Posterior vena cava (tissue), 2 donors: ENCODE measurements at regions of chr17 and their contacts with region 1.

Region 1: DNA sequence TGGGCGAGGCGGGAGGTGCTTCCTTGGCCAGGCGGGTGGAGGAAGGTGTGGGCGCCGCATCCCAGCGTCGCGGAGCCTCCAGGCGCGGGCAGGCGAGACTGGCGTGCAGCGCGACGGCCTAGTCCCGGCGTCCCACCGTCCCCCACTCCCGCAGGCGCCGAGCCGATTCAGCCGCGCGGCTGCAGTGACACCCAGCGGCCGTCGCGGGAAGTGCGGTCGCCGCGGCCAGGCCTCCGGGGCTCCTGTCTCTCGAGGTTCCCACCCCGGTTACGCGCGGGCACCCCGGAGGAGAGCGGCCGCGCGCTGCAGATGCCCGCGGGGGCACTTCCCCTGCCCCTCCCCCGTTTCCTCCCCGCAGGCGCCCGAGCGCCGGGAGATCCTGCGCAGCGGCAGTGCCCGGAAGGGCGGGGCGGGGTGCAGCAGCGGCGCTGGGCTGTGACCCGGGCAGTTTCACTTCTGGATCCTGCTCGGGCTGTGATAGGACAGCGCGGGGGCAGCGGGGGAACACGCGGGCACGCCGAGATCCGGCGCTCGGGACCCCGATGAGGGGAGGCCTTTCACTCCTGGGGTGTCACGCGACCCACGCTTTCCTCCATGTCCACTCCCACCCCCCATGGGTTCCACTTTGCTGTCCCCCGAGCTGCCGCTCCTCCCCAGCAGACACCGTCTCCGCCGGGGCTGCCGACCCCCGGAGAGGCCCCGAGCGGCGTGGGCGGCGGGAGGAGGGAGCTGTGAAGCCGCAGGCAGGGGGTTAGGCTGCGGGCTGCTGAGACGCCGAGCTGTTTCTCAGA is 16.6 kb downstream of the GRB7 start:
- DNase-seq: peak; percentile 98

Region 2: DNA sequence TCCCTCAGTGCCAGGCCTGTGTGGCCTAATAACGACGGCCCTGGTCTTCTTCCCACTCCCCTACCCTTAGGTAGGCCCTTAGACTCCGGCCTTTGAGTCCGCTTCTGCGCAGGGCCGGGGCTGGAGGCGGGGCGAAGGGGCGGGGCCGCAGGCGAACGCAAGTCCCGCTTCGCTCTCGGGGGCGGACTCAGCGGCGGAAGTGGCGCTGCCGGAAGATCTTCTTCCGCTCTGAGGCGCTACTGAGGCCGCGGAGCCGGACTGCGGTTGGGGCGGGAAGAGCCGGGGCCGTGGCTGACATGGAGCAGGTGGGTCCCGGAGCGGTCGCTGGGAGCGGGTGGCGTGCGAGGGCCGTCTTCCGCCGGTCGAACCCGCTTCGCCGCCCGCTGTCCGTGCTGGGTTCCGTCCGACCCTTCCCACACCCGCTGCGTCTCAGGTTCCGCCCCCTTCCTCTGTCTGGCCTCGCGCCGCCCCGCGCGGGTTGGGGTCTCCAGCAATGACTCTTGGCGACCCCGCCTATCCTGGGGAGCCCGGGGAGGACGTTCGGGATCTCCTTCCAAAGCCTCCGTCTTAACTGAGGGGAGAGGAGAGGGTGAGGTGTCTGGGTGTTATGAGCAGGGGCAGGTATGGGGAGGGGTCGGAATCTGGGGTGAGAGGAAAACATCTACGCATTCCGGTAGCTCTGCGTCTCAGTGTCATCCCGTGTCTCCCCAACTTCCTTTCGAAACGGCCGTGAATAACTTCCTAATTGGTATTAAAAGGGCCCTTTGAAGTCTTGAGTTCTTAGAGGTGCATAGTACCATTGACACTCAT is 117.2 kb before region 1 on chr17 and contains the start of gene STARD3:
- intact Hi-C with region 1: loop called in 1 of 2 experiments (anchors 5 kb)
- DNase-seq: peak; percentile 98
- total RNA-seq, gene STARD3: 32.8 to 35.4 TPM